CD4-positive, alpha-beta T cell (primary cell): ENCODE measurements at regions of chr12 and their contacts with region 1.

Region 1: DNA sequence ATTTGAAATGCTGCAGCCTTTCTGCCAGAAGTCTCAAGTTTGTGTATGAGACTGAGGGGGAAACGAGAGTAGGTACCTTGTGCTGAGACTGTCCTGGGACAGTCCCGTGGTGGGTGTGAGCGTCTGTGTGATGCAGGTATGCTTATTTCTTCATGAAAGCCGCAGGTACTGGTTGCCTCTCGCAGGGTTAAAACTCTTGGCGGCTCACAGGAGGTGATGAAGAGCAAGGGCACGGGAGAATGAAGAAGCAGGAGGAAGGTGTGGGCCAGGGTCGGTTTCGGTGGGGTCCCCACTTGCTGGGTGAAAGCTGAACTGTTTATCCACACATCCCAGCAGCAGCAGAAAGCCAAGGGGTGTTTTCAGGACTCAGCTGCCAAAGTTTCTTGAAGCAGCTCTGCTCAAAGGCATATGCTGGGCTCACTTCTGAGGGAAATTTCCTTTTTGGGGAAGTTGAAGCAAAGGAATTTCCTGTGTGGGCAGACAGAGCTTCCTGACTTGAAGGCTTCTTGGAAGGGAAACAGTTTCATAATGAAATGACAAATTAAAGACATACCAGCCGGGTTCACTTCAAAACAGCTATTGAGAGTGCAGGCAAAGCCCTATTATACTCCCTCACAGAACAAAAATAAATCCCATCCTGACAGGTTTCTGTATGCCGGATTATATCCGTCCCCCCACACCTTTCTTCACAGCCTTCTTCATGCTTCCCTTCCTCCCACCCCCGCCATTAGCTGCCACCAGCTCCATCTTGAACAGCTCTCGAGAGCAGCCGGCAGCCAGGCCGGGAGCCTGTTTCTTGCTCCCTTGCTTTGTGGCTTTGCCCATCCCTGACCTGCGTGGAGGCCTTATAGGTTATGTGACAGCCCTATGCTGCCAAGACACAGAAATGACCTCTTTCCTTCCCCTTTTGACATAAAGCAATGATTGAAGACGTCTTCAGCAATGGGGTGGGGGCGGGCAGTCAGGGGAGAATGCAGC is 116.6 kb downstream of the ETV6 start:
- DNase-seq: peak in 11 of 14 experiments; percentile 5 to 64 (median 22)
- ATAC-seq: peak; percentile 79
- H3K4me3 ChIP-seq: peak overlapping the region; percentile 6
- H3K4me3 Mint-ChIP-seq: peak overlapping the region; percentile 54
- H3K27ac ChIP-seq: peak overlapping the region; percentile 3 to 50
- H3K27ac Mint-ChIP-seq: peak overlapping the region; percentile 80
- H3K4me1 ChIP-seq: peaks cover 44% of the 10 kb centered on the region
- H3K4me1 Mint-ChIP-seq: peaks cover 96% of the 10 kb centered on the region
- H3K27me3 ChIP-seq: no peaks in the 10 kb centered on the region
- H3K27me3 Mint-ChIP-seq: no peaks in the 10 kb centered on the region
- CTCF ChIP-seq: no peak

Region 2: DNA sequence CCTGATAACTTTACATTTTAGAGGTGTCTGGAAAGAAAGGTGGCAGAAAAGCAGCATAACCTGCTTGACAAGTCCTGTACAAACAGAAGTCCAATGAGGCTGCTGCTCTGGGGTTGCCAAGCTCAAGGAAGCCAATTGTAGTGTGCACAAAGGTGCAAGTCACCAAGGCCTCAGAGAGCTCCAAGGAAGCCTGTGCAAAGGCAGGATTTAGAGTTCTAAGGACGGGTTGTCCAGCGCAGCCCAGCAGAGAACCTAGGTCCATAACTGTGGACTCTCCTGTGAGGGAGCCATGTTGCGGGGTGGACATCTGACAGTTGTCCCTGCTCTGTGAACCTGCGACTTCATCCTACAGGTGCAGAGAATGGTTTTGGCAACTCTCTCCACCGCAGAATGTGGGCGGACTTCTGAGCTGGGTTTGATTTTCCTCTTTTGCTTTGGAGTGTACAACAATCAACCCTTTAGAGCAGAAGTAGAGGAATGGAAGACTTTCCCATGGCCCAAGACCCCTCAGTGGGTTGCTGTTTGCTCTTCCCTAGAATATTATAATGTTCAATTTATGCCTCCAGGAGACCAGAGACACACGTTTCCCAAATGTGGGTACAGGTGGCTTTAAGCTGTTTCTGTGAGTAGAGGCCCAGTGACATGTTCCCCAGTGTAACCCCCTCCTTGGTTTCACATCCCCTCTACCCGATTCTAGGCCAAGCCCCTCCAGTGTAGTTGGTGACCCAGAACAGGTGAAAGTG is 35.6 kb before region 1 on chr12:
- CTCF ChIA-PET with region 1: no interaction called
- POLR2A ChIA-PET with region 1: interaction called, 9 read pairs
- intact Hi-C with region 1: loop called in 1 of 2 experiments (anchors 5 kb)
- DNase-seq: peak in 2 of 14 experiments; percentile 9 to 32
- ATAC-seq: no peak
- H3K4me3 ChIP-seq: no peak overlapping the region
- H3K4me3 Mint-ChIP-seq: peak overlapping the region; percentile 53
- H3K27ac ChIP-seq: peak overlapping the region; percentile 61 to 68
- H3K27ac Mint-ChIP-seq: peak overlapping the region; percentile 92
- H3K4me1 ChIP-seq: peaks cover 57% of the 10 kb centered on the region
- H3K4me1 Mint-ChIP-seq: peaks cover 75% of the 10 kb centered on the region
- H3K27me3 ChIP-seq: no peaks in the 10 kb centered on the region
- H3K27me3 Mint-ChIP-seq: no peaks in the 10 kb centered on the region
- CTCF ChIP-seq: no peak

Region 3: GRCh38 chr12:11805043-11805442 is 38.9 kb after region 1 on chr12:
- CTCF ChIA-PET with region 1: no interaction called
- POLR2A ChIA-PET with region 1: no interaction called
- intact Hi-C with region 1: no loop called
- DNase-seq: no peak
- ATAC-seq: no peak
- H3K4me3 ChIP-seq: no peak overlapping the region
- H3K4me3 Mint-ChIP-seq: no peak overlapping the region
- H3K27ac ChIP-seq: no peak overlapping the region
- H3K27ac Mint-ChIP-seq: no peak overlapping the region
- H3K4me1 ChIP-seq: peaks cover 8% of the 10 kb centered on the region
- H3K4me1 Mint-ChIP-seq: peaks cover 72% of the 10 kb centered on the region
- H3K27me3 ChIP-seq: no peaks in the 10 kb centered on the region
- H3K27me3 Mint-ChIP-seq: no peaks in the 10 kb centered on the region
- CTCF ChIP-seq: no peak

Region 4: GRCh38 chr12:11827091-11828061 is 61.3 kb after region 1 on chr12:
- CTCF ChIA-PET with region 1: no interaction called
- POLR2A ChIA-PET with region 1: no interaction called
- intact Hi-C with region 1: no loop called
- DNase-seq: peak in 5 of 14 experiments; percentile 9 to 50 (median 29)
- ATAC-seq: no peak
- H3K4me3 ChIP-seq: no peak overlapping the region
- H3K4me3 Mint-ChIP-seq: peak overlapping the region; percentile 54
- H3K27ac ChIP-seq: no peak overlapping the region
- H3K27ac Mint-ChIP-seq: peak overlapping the region; percentile 71
- H3K4me1 ChIP-seq: peaks cover 31% of the 10 kb centered on the region
- H3K4me1 Mint-ChIP-seq: peaks cover 25% of the 10 kb centered on the region
- H3K27me3 ChIP-seq: no peaks in the 10 kb centered on the region
- H3K27me3 Mint-ChIP-seq: no peaks in the 10 kb centered on the region
- CTCF ChIP-seq: no peak